ENCODE measurements at regions of chr6 and their contacts with region 1.

Region 1: GRCh38 chr6:157323255-157323965 is at the start of gene TMEM242:
- DNase-seq: peak; percentile 86
- CTCF ChIP-seq: no peak

Region 2: DNA sequence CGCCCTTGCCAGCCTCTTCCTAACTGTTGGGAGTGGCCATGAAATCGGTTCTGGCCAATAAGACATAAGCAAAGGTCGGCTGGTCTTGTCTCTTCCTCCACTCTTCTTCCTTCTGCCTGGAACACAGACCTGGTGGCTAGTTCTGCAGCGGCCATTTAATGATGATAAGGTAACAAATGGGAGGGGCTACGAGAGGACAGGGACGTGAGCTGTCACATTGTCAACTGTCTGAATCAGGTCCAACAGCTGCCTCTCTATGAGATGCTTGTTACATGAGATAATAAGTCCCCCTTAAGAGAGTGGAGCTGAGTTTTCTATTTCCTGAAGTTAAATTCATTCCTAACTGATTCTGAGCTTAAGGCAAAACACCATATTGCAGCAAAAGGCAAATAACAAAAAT is 12.4 kb after region 1 on chr6:
- CTCF ChIA-PET with region 1: interaction called, 13 read pairs
- POLR2A ChIA-PET with region 1: no interaction called
- DNase-seq: no peak
- CTCF ChIP-seq: no peak

Region 3: DNA sequence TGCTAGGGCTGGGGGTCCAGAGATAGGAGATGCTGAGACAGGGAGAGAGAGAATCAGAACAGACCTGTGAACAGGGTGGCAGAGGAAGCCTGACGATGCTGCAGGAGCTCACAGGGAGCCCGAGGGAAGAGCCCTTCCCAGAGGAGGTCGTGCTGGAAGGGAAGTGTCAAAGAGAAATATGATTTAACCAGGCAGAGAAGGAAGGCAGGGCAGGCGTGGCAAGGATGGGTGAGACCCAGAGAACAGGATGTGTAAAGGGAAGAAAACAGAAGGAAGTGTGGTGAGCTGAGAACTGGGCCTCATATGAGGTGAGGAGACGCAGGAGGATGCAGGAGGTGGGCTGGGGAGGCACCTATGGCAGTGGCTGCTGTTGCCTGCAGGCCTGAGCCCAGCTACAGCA is 163.2 kb after region 1 on chr6:
- CTCF ChIA-PET with region 1: no interaction called
- POLR2A ChIA-PET with region 1: no interaction called
- DNase-seq: no peak
- CTCF ChIP-seq: no peak